ENCODE measurements at regions of chr13 and their contacts with region 1.

Region 1: GRCh38 chr13:24053519-24054251 is 106.8 kb upstream of the SPATA13 start:
- DNase-seq: peak; percentile 72
- H3K4me3 ChIP-seq: no peak overlapping the region
- H3K27ac ChIP-seq: no peak overlapping the region
- H3K4me1 ChIP-seq: peaks cover 16% of the 10 kb centered on the region
- H3K27me3 ChIP-seq: no peaks in the 10 kb centered on the region
- CTCF ChIP-seq: peak; percentile 56 to 68
- POLR2A ChIP-seq: no peak

Region 2: GRCh38 chr13:24020375-24020830 is 33.3 kb before region 1 on chr13:
- CTCF ChIA-PET with region 1: interaction called, 33 read pairs
- POLR2A ChIA-PET with region 1: no interaction called
- dilution Hi-C with region 1: no loop called
- intact Hi-C with region 1: loop called (anchors 1 kb)
- DNase-seq: peak; percentile 67
- H3K4me3 ChIP-seq: no peak overlapping the region
- H3K27ac ChIP-seq: no peak overlapping the region
- H3K4me1 ChIP-seq: no peaks in the 10 kb centered on the region
- H3K27me3 ChIP-seq: no peaks in the 10 kb centered on the region
- CTCF ChIP-seq: peak; percentile 62 to 74
- POLR2A ChIP-seq: no peak

Region 3: GRCh38 chr13:24090049-24090448 is 36.4 kb after region 1 on chr13:
- CTCF ChIA-PET with region 1: no interaction called
- POLR2A ChIA-PET with region 1: no interaction called
- dilution Hi-C with region 1: no loop called
- intact Hi-C with region 1: no loop called
- DNase-seq: no peak
- H3K4me3 ChIP-seq: no peak overlapping the region
- H3K27ac ChIP-seq: no peak overlapping the region
- H3K4me1 ChIP-seq: peaks cover 15% of the 10 kb centered on the region
- H3K27me3 ChIP-seq: peaks cover 0 to 2% of the 10 kb centered on the region in 2 experiments
- CTCF ChIP-seq: no peak
- POLR2A ChIP-seq: no peak

Region 4: GRCh38 chr13:24100188-24100587 is 46.5 kb after region 1 on chr13:
- CTCF ChIA-PET with region 1: interaction called, 10 read pairs
- POLR2A ChIA-PET with region 1: no interaction called
- dilution Hi-C with region 1: no loop called
- intact Hi-C with region 1: no loop called
- DNase-seq: no peak
- H3K4me3 ChIP-seq: no peak overlapping the region
- H3K27ac ChIP-seq: no peak overlapping the region
- H3K4me1 ChIP-seq: no peaks in the 10 kb centered on the region
- H3K27me3 ChIP-seq: peaks cover 0 to 7% of the 10 kb centered on the region in 2 experiments
- CTCF ChIP-seq: no peak
- POLR2A ChIP-seq: no peak

Region 5: GRCh38 chr13:24160454-24161009 is 106.8 kb after region 1 on chr13 and contains the start of gene SPATA13:
- CTCF ChIA-PET with region 1: interaction called, 26 read pairs
- POLR2A ChIA-PET with region 1: no interaction called
- dilution Hi-C with region 1: no loop called
- intact Hi-C with region 1: loop called (anchors 1 kb)
- DNase-seq: peak; percentile 90
- H3K4me3 ChIP-seq: peak within 1 kb of the TSS; percentile 64 to 77 (median 73)
- H3K27ac ChIP-seq: peak within 1 kb of the TSS; percentile 61
- H3K4me1 ChIP-seq: peaks cover 17% of the 10 kb centered on the region
- H3K27me3 ChIP-seq: no peaks in the 10 kb centered on the region
- CTCF ChIP-seq: no peak
- POLR2A ChIP-seq: peak; percentile 75
- total RNA-seq, gene SPATA13: 12.9 and 13.3 TPM in 2 replicates

Region 6: GRCh38 chr13:24220086-24220703 is 166.5 kb after region 1 on chr13:
- CTCF ChIA-PET with region 1: interaction called, 117 read pairs
- POLR2A ChIA-PET with region 1: no interaction called
- dilution Hi-C with region 1: no loop called
- intact Hi-C with region 1: loop called (anchors 1 kb)
- DNase-seq: peak; percentile 77
- H3K4me3 ChIP-seq: no peak overlapping the region
- H3K27ac ChIP-seq: no peak overlapping the region
- H3K4me1 ChIP-seq: peaks cover 10% of the 10 kb centered on the region
- H3K27me3 ChIP-seq: no peaks in the 10 kb centered on the region
- CTCF ChIP-seq: peak; percentile 60 to 62
- POLR2A ChIP-seq: no peak